B cell (primary cell): ENCODE measurements at regions of chr14 and their contacts with region 1.

Region 1: GRCh38 chr14:21121106-21121505 is 20.2 kb downstream of the TMEM253 start:
- DNase-seq: no peak
- ATAC-seq: no peak
- H3K4me3 ChIP-seq: no peak overlapping the region
- H3K4me3 Mint-ChIP-seq: no peak overlapping the region
- H3K27ac ChIP-seq: no peak overlapping the region
- H3K27ac Mint-ChIP-seq: no peak overlapping the region
- H3K4me1 ChIP-seq: no peaks in the 10 kb centered on the region
- H3K4me1 Mint-ChIP-seq: no peaks in the 10 kb centered on the region
- H3K27me3 ChIP-seq: peaks cover 0 to 13% (median 7%) of the 10 kb centered on the region in 4 experiments
- H3K27me3 Mint-ChIP-seq: peaks cover 48% of the 10 kb centered on the region
- CTCF ChIP-seq: no peak

Region 2: DNA sequence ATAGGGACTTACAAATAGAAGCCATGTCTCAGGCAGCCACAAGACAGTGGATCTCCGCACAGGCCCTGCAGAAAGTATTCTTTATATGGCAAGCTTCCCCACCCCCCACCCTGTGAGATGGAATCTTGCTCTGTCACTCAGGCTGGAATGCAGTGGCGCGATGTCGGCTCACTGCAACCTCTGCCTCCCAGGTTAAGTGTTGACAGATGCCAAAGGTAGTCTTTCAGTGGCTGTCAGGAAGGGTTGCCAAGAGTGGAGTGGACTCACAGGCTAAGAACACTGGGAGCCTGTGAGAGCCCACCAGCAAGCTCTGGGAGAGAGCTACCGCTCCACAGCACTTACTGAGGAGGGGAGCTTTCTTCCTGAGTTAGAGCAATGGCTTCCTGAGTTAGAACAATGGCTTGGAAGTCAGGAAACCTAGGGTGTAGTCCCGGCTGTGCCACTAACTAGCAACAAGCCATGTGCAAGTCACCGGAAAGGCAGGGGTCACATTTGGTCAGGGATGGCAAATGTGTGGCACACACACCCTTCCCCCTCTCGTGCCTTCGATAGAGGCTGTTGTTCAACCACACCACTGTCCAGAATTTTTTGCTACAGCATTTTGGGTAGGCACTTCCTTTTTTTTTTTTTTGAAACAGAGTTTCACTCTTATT is 321.1 kb before region 1 on chr14:
- CTCF ChIA-PET with region 1: no interaction called
- POLR2A ChIA-PET with region 1: no interaction called
- intact Hi-C with region 1: no loop called
- DNase-seq: peak; percentile 35
- ATAC-seq: peak; percentile 41
- H3K4me3 ChIP-seq: peak overlapping the region in 2 of 5 experiments; percentile 2 to 3
- H3K4me3 Mint-ChIP-seq: peak overlapping the region; percentile 29
- H3K27ac ChIP-seq: no peak overlapping the region
- H3K27ac Mint-ChIP-seq: peak overlapping the region; percentile 32
- H3K4me1 ChIP-seq: peaks cover 34 to 35% of the 10 kb centered on the region in 2 donors
- H3K4me1 Mint-ChIP-seq: peaks cover 31% of the 10 kb centered on the region
- H3K27me3 ChIP-seq: no peaks in the 10 kb centered on the region
- H3K27me3 Mint-ChIP-seq: no peaks in the 10 kb centered on the region
- CTCF ChIP-seq: no peak

Region 3: GRCh38 chr14:20956376-20956976 is 164.6 kb before region 1 on chr14:
- CTCF ChIA-PET with region 1: no interaction called
- POLR2A ChIA-PET with region 1: interaction called, 13 read pairs
- intact Hi-C with region 1: no loop called
- DNase-seq: no peak
- ATAC-seq: no peak
- H3K4me3 ChIP-seq: no peak overlapping the region
- H3K4me3 Mint-ChIP-seq: no peak overlapping the region
- H3K27ac ChIP-seq: no peak overlapping the region
- H3K27ac Mint-ChIP-seq: no peak overlapping the region
- H3K4me1 ChIP-seq: peaks cover 0 to 2% of the 10 kb centered on the region in 2 donors
- H3K4me1 Mint-ChIP-seq: peaks cover 8% of the 10 kb centered on the region
- H3K27me3 ChIP-seq: peaks cover 0 to 4% (median 3%) of the 10 kb centered on the region in 4 experiments
- H3K27me3 Mint-ChIP-seq: peaks cover 30% of the 10 kb centered on the region
- CTCF ChIP-seq: no peak

Region 4: DNA sequence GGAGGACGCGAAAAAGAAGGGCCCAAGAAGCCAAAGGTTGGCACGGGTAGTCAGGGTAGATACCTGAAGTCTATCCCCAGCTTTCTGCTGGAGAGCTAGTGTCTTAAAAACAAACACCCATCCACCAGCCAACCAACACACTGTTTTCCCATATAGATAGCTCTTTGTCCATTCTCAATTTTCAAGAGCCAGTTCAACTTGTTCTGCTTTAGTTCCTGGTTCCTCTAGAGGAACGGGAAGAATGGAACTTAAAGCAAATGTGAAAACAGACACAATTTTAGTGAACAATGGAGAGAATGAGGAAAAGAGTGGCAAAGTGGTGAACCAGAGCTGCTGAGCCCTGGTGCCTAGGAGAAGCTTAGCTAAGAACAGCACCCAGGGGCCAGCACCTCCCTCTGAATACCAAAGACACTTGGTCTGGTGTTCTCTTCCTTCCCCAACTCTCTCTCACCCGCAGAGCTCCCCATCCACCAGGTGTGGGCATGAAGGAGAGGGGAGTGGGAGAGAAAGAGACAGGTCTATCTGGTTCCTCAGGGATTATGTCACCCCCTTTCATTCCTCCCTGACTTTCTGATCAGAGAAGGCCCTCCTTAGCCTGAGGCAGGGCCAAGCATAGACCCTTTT is 100.0 kb before region 1 on chr14:
- CTCF ChIA-PET with region 1: no interaction called
- POLR2A ChIA-PET with region 1: no interaction called
- intact Hi-C with region 1: no loop called
- DNase-seq: no peak
- ATAC-seq: no peak
- H3K4me3 ChIP-seq: no peak overlapping the region
- H3K4me3 Mint-ChIP-seq: no peak overlapping the region
- H3K27ac ChIP-seq: no peak overlapping the region
- H3K27ac Mint-ChIP-seq: no peak overlapping the region
- H3K4me1 ChIP-seq: peaks cover 12 to 23% of the 10 kb centered on the region in 2 donors
- H3K4me1 Mint-ChIP-seq: peaks cover 19% of the 10 kb centered on the region
- H3K27me3 ChIP-seq: peaks cover 0 to 30% (median 8%) of the 10 kb centered on the region in 4 experiments
- H3K27me3 Mint-ChIP-seq: peaks cover 23% of the 10 kb centered on the region
- CTCF ChIP-seq: no peak

Region 5: DNA sequence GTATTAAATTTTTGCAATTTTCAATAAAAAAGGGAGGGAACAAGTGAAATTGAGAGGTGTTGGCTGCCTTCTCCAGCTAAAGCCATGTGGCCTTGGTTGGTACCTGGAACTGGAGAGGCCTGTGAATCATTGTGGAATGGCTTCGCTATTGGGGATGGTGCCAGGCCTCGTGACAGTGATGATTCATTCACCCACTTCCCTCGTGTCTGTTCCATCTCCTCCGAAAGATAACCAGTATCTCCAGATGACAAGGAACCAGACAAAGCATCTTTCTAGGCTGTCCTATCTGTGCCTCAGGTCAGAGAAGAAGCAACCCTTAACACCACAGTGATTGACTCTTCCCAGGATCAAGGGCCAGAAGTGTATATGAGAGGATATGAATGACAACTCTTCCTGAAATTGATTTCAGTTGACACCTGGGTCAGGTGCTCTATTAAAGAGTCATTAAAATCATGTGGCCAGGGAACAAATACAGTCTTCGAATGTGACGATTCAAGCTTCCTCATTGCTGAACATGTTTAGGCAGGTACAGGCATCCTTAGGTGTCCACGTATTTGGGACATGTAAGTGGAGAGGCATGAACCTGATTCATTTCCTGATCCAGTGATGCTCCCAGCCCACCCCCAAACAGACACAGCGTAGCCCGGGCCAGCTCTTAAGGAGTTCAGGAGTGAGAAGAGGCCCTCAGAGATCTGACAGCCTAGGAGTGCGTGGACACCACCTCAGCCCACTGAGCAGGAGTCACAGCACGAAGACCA is 79.3 kb before region 1 on chr14 and contains the start of gene RNASE7:
- CTCF ChIA-PET with region 1: no interaction called
- POLR2A ChIA-PET with region 1: no interaction called
- intact Hi-C with region 1: no loop called
- DNase-seq: no peak
- ATAC-seq: no peak
- H3K4me3 ChIP-seq: no peak within 1 kb of the TSS
- H3K4me3 Mint-ChIP-seq: no peak within 1 kb of the TSS
- H3K27ac ChIP-seq: no peak within 1 kb of the TSS
- H3K27ac Mint-ChIP-seq: no peak within 1 kb of the TSS
- H3K4me1 ChIP-seq: no peaks in the 10 kb centered on the region
- H3K4me1 Mint-ChIP-seq: no peaks in the 10 kb centered on the region
- H3K27me3 ChIP-seq: no peaks in the 10 kb centered on the region
- H3K27me3 Mint-ChIP-seq: peaks cover 54% of the 10 kb centered on the region
- CTCF ChIP-seq: no peak
- total RNA-seq, gene RNASE7: not detected in 2 replicates